MCF 10A (cell line): ENCODE measurements at regions of chr6 and their contacts with region 1.

Region 1: GRCh38 chr6:27479319-27480182 is 6.6 kb upstream of the ZNF184 start:
- DNase-seq: peak; percentile 87
- H3K4me3 Mint-ChIP-seq: no peak overlapping the region
- H3K27ac Mint-ChIP-seq: no peak overlapping the region
- H3K4me1 Mint-ChIP-seq: no peaks in the 10 kb centered on the region
- H3K27me3 Mint-ChIP-seq: no peaks in the 10 kb centered on the region
- CTCF ChIP-seq: no peak

Region 2: GRCh38 chr6:27177485-27178406 is 301.8 kb before region 1 on chr6:
- CTCF ChIA-PET with region 1: no interaction called
- POLR2A ChIA-PET with region 1: interaction called, 18 read pairs
- intact Hi-C with region 1: no loop called
- DNase-seq: peak; percentile 92
- H3K4me3 Mint-ChIP-seq: peak overlapping the region; percentile 87
- H3K27ac Mint-ChIP-seq: peak overlapping the region; percentile 92
- H3K4me1 Mint-ChIP-seq: no peaks in the 10 kb centered on the region
- H3K27me3 Mint-ChIP-seq: no peaks in the 10 kb centered on the region
- CTCF ChIP-seq: peak; percentile 36

Region 3: GRCh38 chr6:27332692-27333641 is 146.6 kb before region 1 on chr6:
- CTCF ChIA-PET with region 1: no interaction called
- POLR2A ChIA-PET with region 1: interaction called, 3 read pairs
- intact Hi-C with region 1: loop called (anchors 1 kb)
- DNase-seq: peak; percentile 84
- H3K4me3 Mint-ChIP-seq: peak overlapping the region; percentile 78
- H3K27ac Mint-ChIP-seq: peak overlapping the region; percentile 27
- H3K4me1 Mint-ChIP-seq: peaks cover 18% of the 10 kb centered on the region
- H3K27me3 Mint-ChIP-seq: no peaks in the 10 kb centered on the region
- CTCF ChIP-seq: no peak

Region 4: DNA sequence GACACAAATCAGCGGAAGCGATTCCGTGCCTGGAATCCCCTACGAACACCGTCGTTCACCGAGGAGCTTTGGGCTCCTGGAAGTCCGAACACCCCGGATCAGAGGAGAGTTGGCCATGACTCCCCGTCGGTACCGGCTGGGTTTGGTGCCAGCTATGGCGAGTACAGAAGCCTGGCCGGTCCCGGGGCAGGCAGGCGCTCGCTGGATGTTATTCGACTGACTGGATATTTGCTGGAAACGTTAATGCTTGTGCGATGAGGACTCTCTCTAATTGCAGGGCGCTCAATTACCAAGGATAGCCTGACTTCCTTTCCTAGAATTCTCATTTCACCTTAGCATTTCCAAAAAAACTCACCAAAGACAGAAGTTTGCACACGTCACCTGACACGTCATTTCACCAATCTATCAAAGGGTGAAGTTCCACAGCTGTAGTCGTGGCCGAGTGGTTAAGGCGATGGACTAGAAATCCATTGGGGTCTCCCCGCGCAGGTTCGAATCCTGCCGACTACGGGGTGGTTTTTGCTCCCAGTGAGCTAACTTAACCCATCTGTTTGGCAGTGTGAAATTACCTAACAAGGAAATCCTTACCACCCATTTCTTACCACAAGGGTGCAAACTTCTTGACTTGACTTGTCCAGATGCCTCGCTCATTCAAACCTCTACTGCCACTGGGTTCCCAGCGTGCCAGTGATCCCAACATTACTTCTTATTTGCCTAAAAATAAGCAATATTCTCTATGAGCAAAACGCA is 16.0 kb after region 1 on chr6:
- CTCF ChIA-PET with region 1: no interaction called
- POLR2A ChIA-PET with region 1: interaction called, 15 read pairs
- intact Hi-C with region 1: loop called (anchors 1 kb)
- DNase-seq: peak; percentile 71
- H3K4me3 Mint-ChIP-seq: peak overlapping the region; percentile 79
- H3K27ac Mint-ChIP-seq: peak overlapping the region; percentile 6
- H3K4me1 Mint-ChIP-seq: peaks cover 6% of the 10 kb centered on the region
- H3K27me3 Mint-ChIP-seq: no peaks in the 10 kb centered on the region
- CTCF ChIP-seq: no peak

Region 5: DNA sequence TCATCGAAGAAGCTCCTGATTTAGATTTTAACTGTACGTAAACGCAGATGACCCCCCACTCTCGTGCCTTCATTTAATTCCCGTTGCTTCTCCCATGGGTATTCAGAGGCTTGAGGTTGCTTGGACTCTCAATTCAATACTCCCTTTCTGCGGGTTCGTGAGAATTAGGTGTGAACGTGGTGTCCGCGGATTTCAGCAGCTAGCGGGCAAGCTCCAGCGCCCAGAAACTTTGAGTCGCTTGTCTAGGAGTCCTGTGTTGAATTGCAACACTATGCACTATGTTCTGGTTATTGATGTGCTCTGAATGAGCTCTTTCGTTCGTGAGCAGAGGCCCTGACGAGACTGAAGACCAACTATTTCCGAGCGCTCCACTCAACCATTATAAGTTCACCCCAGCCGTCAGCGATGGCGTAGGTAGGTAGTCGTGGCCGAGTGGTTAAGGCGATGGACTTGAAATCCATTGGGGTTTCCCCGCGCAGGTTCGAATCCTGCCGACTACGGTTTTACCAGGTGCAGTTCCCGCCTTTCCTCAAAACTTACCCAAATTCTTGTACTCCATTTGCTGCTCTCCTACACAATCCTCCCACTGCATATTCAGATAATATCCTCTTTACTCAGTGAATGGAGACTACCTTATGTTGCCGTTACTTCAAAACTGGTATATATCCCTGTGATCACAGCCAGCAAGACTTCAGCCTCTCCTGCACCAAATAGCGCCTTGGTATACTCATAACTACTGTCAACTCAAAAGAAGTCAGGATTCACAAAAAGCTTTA is 65.9 kb after region 1 on chr6:
- CTCF ChIA-PET with region 1: no interaction called
- POLR2A ChIA-PET with region 1: interaction called, 10 read pairs
- intact Hi-C with region 1: no loop called
- DNase-seq: peak; percentile 87
- H3K4me3 Mint-ChIP-seq: peak overlapping the region; percentile 83
- H3K27ac Mint-ChIP-seq: peak overlapping the region; percentile 91
- H3K4me1 Mint-ChIP-seq: peaks cover 22% of the 10 kb centered on the region
- H3K27me3 Mint-ChIP-seq: no peaks in the 10 kb centered on the region
- CTCF ChIP-seq: no peak

Region 6: DNA sequence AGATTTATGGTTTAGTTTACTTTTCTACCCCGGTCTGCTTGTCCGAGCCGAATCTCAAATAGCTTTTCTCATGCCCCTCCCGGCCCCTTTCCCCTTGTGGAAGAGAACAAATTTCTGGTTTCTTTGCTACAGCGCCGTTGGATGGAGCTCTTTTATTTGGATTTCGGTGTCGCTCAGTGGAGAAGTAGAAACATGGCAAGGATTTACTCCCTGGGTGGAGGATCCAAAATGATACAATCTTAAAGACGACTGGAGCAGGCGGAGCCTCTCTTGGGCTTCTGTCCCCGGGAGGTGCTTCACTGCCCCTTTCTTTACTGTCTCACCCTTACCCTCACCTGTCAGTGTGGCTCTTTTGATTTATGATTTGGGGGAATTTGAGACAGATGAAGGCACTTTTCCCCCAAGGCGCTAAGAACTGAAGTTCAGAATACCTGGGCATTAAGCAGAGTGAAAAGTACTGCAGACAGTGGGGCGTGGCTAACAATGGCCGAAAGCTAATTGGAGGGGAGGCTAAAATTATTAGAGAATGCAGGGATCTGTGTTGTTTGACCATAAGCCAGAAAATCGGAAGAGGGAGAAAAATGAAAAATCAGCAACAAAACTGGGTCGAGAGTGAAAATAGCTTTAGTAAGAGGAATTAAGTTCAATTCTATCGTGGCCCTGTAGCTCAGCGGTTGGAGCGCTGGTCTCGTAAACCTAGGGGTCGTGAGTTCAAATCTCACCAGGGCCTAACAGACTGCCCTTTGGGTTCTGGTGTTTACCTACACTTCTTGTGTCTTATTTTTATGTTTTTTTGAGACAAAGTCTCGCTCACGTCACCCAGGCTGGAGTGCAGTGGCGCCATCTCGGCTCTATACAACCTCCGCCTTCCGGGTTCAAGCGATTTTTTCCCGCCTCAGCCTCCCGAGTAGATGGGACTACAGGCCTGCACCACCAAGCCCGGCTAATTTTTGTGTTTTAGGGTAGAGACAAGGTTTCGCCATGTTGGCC is 138.4 kb after region 1 on chr6:
- CTCF ChIA-PET with region 1: no interaction called
- POLR2A ChIA-PET with region 1: interaction called, 15 read pairs
- intact Hi-C with region 1: no loop called
- DNase-seq: peak; percentile 68
- H3K4me3 Mint-ChIP-seq: peak overlapping the region; percentile 89
- H3K27ac Mint-ChIP-seq: peak overlapping the region; percentile 86
- H3K4me1 Mint-ChIP-seq: peaks cover 6% of the 10 kb centered on the region
- H3K27me3 Mint-ChIP-seq: no peaks in the 10 kb centered on the region
- CTCF ChIP-seq: peak; percentile 9